CD4-positive, alpha-beta T cell (primary cell): ENCODE measurements at regions of chr6 and their contacts with region 1.

Region 1: GRCh38 chr6:39361657-39362486 is 39.4 kb upstream of the KCNK16 start:
- DNase-seq: peak in 13 of 14 experiments; percentile 13 to 65 (median 26)
- ATAC-seq: peak; percentile 52
- H3K4me3 ChIP-seq: no peak overlapping the region
- H3K4me3 Mint-ChIP-seq: no peak overlapping the region
- H3K27ac ChIP-seq: no peak overlapping the region
- H3K27ac Mint-ChIP-seq: no peak overlapping the region
- H3K4me1 ChIP-seq: peaks cover 7% of the 10 kb centered on the region
- H3K4me1 Mint-ChIP-seq: peaks cover 4% of the 10 kb centered on the region
- H3K27me3 ChIP-seq: no peaks in the 10 kb centered on the region
- H3K27me3 Mint-ChIP-seq: peaks cover 12% of the 10 kb centered on the region
- CTCF ChIP-seq: peak; percentile 60

Region 2: DNA sequence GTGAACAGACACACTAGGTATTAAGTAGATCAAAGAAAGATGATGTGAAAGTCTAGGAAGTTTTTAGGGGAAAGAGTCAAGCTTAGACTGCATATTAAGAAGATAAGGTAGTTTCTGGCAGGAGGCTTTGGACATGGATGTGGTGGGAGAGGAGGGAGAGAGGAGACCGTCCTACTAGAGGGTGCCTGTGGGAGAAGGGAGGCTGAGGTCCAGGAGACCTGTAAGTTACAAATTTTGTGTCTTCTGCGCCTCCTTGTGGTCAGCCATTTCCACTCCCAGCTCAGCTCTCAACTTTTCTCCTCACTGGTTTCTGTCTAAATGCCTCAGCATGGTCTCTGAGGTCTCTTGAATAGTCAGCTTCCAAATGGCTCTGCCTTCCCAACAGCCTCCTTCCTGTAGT is 1483.7 kb after region 1 on chr6:
- CTCF ChIA-PET with region 1: no interaction called
- POLR2A ChIA-PET with region 1: no interaction called
- intact Hi-C with region 1: loop called in 1 of 2 experiments (anchors 5 kb)
- DNase-seq: peak in 8 of 14 experiments; percentile 1 to 44 (median 14)
- ATAC-seq: no peak
- H3K4me3 ChIP-seq: no peak overlapping the region
- H3K4me3 Mint-ChIP-seq: no peak overlapping the region
- H3K27ac ChIP-seq: no peak overlapping the region
- H3K27ac Mint-ChIP-seq: no peak overlapping the region
- H3K4me1 ChIP-seq: no peaks in the 10 kb centered on the region
- H3K4me1 Mint-ChIP-seq: no peaks in the 10 kb centered on the region
- H3K27me3 ChIP-seq: peaks cover 2 to 15% of the 10 kb centered on the region in 2 experiments
- H3K27me3 Mint-ChIP-seq: peaks cover 35% of the 10 kb centered on the region
- CTCF ChIP-seq: peak; percentile 30